ENCODE measurements at regions of chrX and their contacts with region 1.

Region 1: GRCh38 chrX:120769576-120770341 is 105.9 kb downstream of the CT47B1 start:
- DNase-seq: peak in 4 of 9 donors; percentile 5 to 39 (median 34)
- ATAC-seq: no peak
- H3K4me3 ChIP-seq: no peak overlapping the region
- H3K4me3 Mint-ChIP-seq: no peak overlapping the region
- H3K27ac ChIP-seq: no peak overlapping the region
- H3K27ac Mint-ChIP-seq: no peak overlapping the region
- H3K4me1 ChIP-seq: no peaks in the 10 kb centered on the region
- H3K4me1 Mint-ChIP-seq: peaks cover 0 to 11% (median 0%) of the 10 kb centered on the region in 7 donors
- H3K27me3 ChIP-seq: no peaks in the 10 kb centered on the region
- H3K27me3 Mint-ChIP-seq: no peaks in the 10 kb centered on the region

Region 2: DNA sequence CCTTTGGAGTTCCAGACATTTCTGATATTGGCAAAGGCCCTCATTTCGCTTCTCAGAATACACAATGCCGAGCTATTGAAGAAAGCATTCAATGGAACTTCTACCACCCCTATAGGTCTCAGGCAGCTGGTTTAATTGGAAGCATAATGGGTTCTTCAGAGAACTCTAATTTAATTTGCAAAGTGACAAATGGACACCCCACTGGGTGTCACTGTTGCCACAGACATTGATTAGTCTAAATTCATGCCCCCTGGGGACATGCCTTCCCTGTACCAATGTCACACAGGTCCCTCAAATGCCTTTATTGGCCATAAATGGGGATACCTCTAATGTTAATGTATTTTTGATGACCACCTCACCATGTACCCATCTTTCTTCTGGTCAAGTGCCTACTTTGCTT is 435.6 kb before region 1 on chrX:
- CTCF ChIA-PET with region 1: no interaction called
- POLR2A ChIA-PET with region 1: no interaction called
- intact Hi-C with region 1: loop called in 1 of 2 experiments (anchors 5 kb)
- DNase-seq: peak in 1 of 9 donors; percentile 5
- ATAC-seq: no peak
- H3K4me3 ChIP-seq: no peak overlapping the region
- H3K4me3 Mint-ChIP-seq: no peak overlapping the region
- H3K27ac ChIP-seq: no peak overlapping the region
- H3K27ac Mint-ChIP-seq: no peak overlapping the region
- H3K4me1 ChIP-seq: no peaks in the 10 kb centered on the region
- H3K4me1 Mint-ChIP-seq: peaks cover 0 to 1% (median 0%) of the 10 kb centered on the region in 7 donors
- H3K27me3 ChIP-seq: no peaks in the 10 kb centered on the region
- H3K27me3 Mint-ChIP-seq: peaks cover 0 to 7% (median 0%) of the 10 kb centered on the region in 5 donors

Region 3: GRCh38 chrX:120499301-120500072 is 270.3 kb before region 1 on chrX:
- CTCF ChIA-PET with region 1: interaction called, 3 read pairs
- POLR2A ChIA-PET with region 1: no interaction called
- intact Hi-C with region 1: loop called (anchors 1 kb)
- DNase-seq: no peak
- ATAC-seq: no peak
- H3K4me3 ChIP-seq: no peak overlapping the region
- H3K4me3 Mint-ChIP-seq: no peak overlapping the region
- H3K27ac ChIP-seq: no peak overlapping the region
- H3K27ac Mint-ChIP-seq: peak overlapping the region in 1 of 9 donors; percentile 1
- H3K4me1 ChIP-seq: no peaks in the 10 kb centered on the region
- H3K4me1 Mint-ChIP-seq: peaks cover 5 to 11% (median 6%) of the 10 kb centered on the region in 7 donors
- H3K27me3 ChIP-seq: no peaks in the 10 kb centered on the region
- H3K27me3 Mint-ChIP-seq: peaks cover 0 to 5% (median 0%) of the 10 kb centered on the region in 5 donors

Region 4: DNA sequence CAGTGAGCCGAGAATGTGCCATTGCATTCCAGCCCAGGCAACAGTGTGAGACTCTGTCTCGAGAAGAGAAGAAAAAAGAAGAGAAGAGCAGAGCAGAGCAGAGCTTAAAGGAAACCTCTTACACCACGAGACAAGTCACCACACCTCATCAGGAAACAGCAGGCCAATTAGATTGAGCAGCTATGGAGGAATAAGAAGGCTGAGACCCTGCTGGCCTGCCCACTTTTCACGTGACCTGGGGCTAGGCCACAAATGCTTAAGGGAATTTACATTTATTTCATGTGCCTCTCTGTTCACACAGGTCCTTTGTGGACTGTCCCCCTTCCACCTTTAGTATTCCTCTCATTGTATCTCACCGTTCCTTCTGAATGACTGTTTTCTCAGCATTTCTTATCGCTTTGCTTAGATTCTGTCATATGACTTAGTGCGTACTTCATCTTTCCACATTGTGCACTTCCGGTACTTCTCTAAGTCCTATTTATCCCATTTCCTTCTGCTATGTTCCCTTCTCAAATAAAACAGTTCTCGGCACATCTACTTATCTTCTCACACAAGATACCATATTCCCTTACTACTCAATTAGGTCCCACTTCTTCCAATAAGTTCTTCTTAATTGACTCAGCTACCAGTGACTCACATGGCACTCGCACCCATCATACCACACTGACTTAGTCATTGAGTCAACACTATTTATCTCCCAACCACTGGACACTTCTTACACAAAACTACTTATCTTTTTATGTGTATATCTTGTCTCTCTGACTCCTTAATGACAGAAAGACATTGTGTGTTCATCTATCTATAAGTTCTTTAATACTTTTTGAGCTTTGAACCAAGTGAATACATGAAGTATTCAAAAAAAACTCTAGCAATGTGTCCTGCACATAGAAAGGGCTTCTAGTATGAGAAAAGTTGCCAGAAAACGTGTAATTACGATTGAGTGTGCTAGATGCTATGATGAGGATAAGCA is 220.0 kb before region 1 on chrX:
- CTCF ChIA-PET with region 1: no interaction called
- POLR2A ChIA-PET with region 1: no interaction called
- intact Hi-C with region 1: loop called in 1 of 2 experiments (anchors 5 kb)
- DNase-seq: no peak
- ATAC-seq: no peak
- H3K4me3 ChIP-seq: no peak overlapping the region
- H3K4me3 Mint-ChIP-seq: peak overlapping the region in 1 of 10 donors; percentile 6
- H3K27ac ChIP-seq: no peak overlapping the region
- H3K27ac Mint-ChIP-seq: peak overlapping the region in 2 of 9 donors; percentile 22 to 41
- H3K4me1 ChIP-seq: no peaks in the 10 kb centered on the region
- H3K4me1 Mint-ChIP-seq: peaks cover 8 to 44% (median 27%) of the 10 kb centered on the region in 7 donors
- H3K27me3 ChIP-seq: no peaks in the 10 kb centered on the region
- H3K27me3 Mint-ChIP-seq: no peaks in the 10 kb centered on the region

Region 5: DNA sequence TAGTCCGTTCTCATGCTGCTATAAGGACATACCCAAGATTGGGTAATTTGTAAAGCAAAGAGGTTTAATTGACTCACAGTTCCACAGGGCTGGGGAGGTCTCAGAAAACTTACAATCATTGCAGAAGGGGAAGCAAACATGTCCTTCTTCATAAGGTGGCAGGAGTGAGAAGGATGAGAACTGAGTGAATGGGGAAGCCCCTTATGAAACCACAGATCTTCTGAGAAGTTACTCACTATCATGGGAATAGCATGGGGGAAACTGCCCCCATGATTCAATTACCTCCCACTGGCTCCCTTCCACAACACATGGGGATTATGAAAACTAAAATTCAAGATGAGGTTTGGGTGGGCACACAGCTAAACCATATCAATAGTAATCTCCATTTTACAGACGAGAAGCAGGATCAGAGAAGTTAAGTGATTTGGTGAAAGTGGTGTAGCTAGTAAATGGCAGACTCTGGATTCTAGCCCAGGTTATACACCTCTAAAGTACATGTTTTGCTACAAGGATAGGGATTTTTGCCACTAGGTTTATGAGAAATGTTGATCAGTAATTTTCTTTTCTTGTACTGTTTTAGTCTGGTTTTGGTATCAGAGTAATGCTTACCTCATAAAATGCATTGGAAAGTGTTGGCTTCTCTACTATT is 92.6 kb before region 1 on chrX:
- CTCF ChIA-PET with region 1: no interaction called
- POLR2A ChIA-PET with region 1: no interaction called
- intact Hi-C with region 1: no loop called
- DNase-seq: no peak
- ATAC-seq: peak; percentile 22
- H3K4me3 ChIP-seq: no peak overlapping the region
- H3K4me3 Mint-ChIP-seq: no peak overlapping the region
- H3K27ac ChIP-seq: no peak overlapping the region
- H3K27ac Mint-ChIP-seq: no peak overlapping the region
- H3K4me1 ChIP-seq: no peaks in the 10 kb centered on the region
- H3K4me1 Mint-ChIP-seq: peaks cover 0 to 15% (median 7%) of the 10 kb centered on the region in 7 donors
- H3K27me3 ChIP-seq: no peaks in the 10 kb centered on the region
- H3K27me3 Mint-ChIP-seq: no peaks in the 10 kb centered on the region

Measured in naive thymus-derived CD4-positive, alpha-beta T cell (primary cell).